Thyroid gland (tissue), 4 donors: ENCODE measurements at regions of chr22 and their contacts with region 1.

Region 1: GRCh38 chr22:45553351-45554039 is 50.8 kb downstream of the FBLN1 start:
- DNase-seq: peak; percentile 76 to 79
- H3K4me3 ChIP-seq: no peak overlapping the region
- H3K27ac ChIP-seq: peak overlapping the region; percentile 14 to 41 (median 33)
- H3K4me1 ChIP-seq: peaks cover 9 to 35% of the 10 kb centered on the region in 2 donors
- H3K27me3 ChIP-seq: no peaks in the 10 kb centered on the region
- CTCF ChIP-seq: peak; percentile 58 to 97 (median 91)
- POLR2A ChIP-seq: no peak

Region 2: DNA sequence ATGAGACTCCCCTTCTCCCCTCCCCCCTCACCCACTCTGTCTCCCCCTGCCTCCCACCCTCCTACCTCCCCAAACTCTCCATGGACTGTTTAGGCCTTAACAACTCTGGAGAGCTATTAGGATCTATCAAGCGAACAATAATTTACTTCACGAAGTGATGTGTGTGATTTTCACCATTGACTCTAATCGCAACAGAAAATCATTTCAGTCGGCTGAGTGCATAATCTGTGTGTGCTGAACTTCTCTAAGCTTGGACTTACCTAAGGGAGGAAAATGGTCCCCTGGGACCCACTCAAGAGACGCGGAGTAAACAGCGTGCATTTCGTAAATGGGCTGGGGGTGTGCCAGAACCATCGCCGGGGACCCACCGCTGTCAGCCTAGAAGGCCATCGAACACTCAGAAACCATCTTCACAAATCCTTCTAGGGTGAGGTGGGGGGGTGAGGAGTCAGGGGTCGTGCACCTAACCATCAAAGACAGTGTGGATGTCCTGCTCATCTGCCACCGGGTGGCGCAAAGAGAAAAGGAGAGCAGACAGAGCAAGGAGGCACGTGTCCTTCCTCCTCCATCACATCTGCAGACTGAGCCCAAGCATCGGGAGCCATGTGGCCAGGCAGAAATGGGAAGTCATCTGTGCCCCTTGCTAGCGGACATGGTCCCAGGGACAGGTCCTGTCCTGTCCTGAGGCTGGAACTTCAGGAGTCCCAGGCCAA is 451.8 kb before region 1 on chr22:
- intact Hi-C with region 1: loop called (anchors 5 kb)
- DNase-seq: peak; percentile 35 to 44
- H3K4me3 ChIP-seq: no peak overlapping the region
- H3K27ac ChIP-seq: no peak overlapping the region
- H3K4me1 ChIP-seq: no peaks in the 10 kb centered on the region
- H3K27me3 ChIP-seq: no peaks in the 10 kb centered on the region
- CTCF ChIP-seq: peak in 3 of 6 experiments; percentile 20 to 21 (median 20)
- POLR2A ChIP-seq: no peak

Region 3: DNA sequence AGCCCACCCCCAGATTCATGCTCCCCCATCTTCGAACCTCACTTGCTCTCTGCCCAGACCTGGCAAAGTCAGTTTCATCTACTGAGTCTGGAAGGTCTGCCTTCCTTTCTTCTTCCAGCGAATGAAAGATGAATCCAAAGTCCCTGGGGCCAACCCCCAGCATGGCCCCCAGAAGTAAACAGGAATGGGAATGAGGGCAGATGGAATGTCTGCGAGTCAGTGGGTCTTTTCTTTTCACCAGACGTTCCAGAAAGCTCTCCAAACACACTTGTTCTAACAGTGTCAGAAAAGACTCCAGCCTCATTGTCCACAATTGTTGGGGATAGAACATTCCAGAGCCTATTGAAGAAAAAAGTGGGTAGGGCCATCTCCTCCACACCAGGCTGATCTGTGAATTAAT is 111.4 kb before region 1 on chr22:
- intact Hi-C with region 1: loop called (anchors 2 kb)
- DNase-seq: no peak
- H3K4me3 ChIP-seq: no peak overlapping the region
- H3K27ac ChIP-seq: no peak overlapping the region
- H3K4me1 ChIP-seq: peaks cover 0 to 6% of the 10 kb centered on the region in 2 donors
- H3K27me3 ChIP-seq: no peaks in the 10 kb centered on the region
- CTCF ChIP-seq: no peak
- POLR2A ChIP-seq: no peak

Region 4: DNA sequence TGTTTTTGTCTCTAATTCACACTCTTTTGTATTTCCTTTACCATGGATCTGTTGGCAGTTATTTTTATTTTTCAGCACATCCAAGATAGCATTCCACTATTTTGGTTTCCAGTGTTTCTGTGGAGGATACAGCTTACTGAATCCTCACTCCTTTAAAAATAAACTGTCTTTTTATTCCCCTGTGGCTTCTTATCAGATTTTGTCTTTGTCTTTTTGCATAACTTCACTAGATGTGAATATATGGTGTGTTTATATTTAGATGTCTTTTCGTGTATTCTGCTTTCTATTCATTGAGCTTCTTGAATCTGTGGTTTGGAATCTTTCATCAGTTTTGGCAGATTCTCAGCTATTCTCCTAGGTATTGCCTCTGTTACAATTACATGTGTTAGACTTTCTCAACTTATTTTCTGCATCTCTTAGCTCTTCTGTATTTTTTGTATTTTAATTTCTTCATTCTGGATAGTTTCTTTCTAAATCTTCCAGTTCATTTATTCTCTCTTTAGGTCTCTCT is 110.7 kb after region 1 on chr22:
- intact Hi-C with region 1: no loop called
- DNase-seq: no peak
- H3K4me3 ChIP-seq: no peak overlapping the region
- H3K27ac ChIP-seq: no peak overlapping the region
- H3K4me1 ChIP-seq: no peaks in the 10 kb centered on the region
- H3K27me3 ChIP-seq: no peaks in the 10 kb centered on the region
- CTCF ChIP-seq: no peak
- POLR2A ChIP-seq: no peak